WTC11 (cell line): ENCODE measurements at regions of chr7 and their contacts with region 1.

Region 1: DNA sequence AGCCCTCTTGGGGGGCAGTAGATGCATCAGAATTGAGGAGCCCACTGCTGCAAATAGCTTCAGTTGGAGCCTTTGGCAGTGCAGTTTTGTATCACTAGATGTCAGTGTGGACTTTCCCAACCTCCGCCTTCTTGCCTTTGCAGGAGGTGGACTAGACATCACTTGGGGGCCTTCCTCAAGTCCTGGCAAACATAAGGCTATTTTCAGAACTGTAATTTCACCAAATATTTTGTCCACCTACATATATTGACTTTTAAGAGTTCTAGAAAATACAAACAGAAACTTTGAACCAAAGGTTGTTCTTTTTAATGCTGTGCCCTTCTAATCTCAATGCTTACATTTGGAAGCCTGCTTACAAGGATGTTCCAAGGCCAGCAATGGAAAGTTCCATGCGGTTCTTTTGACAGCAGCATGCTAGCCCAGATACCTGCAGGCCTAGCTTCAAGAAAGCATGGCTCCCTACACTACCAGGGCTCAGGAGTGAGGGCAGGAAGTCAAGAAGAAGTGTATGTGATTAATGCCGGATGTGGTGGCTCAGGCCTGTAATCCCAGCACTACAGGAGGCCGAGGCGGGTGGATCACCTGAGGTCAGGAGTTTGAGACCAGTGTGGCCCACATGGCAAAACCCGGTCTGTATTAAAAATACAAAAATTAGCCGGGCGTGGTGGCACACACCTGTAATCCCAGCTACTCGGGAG is 8.0 kb upstream of the ZNRF2 start:
- DNase-seq: peak; percentile 60
- ATAC-seq: peak; percentile 97
- H3K4me3 Mint-ChIP-seq: no peak overlapping the region
- H3K27ac Mint-ChIP-seq: no peak overlapping the region
- H3K4me1 Mint-ChIP-seq: peaks cover 11% of the 10 kb centered on the region
- H3K27me3 Mint-ChIP-seq: no peaks in the 10 kb centered on the region
- CTCF ChIP-seq: peak; percentile 35; the same call in 1 of the 2 replicates

Region 2: GRCh38 chr7:30252885-30253795 is 23.2 kb before region 1 on chr7:
- CTCF ChIA-PET with region 1: no interaction called
- POLR2A ChIA-PET with region 1: no interaction called
- DNase-seq: no peak
- ATAC-seq: no peak
- H3K4me3 Mint-ChIP-seq: no peak overlapping the region
- H3K27ac Mint-ChIP-seq: no peak overlapping the region
- H3K4me1 Mint-ChIP-seq: peaks cover 1% of the 10 kb centered on the region; the same call in 1 of the 2 replicates
- H3K27me3 Mint-ChIP-seq: no peaks in the 10 kb centered on the region
- CTCF ChIP-seq: no peak

Region 3: DNA sequence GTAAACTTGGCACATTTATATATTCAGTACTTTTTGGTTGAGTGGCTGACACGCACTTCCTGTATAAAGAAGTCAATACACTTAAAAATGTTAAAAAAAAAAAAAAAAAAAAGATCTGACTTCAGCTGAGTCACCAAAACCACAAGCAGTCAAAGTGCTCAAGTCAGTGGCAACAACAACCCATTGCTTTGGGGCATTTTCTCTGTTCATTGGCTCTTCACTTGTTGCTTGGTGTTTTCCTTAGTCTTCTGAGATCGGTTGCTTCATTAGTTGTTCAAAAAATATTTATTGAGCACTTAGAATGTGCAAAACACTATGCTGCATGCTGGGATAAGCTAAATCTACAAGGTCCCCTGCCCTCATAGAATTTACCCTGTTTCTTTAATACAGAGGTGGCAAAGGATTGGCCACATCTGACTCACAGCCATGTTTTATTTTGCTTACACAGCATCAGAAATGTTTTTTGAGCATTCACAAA is 71.8 kb after region 1 on chr7:
- CTCF ChIA-PET with region 1: interaction called, 11 read pairs
- POLR2A ChIA-PET with region 1: no interaction called
- DNase-seq: no peak
- ATAC-seq: peak; percentile 30; the same call in 1 of the 2 replicates
- H3K4me3 Mint-ChIP-seq: no peak overlapping the region
- H3K27ac Mint-ChIP-seq: peak overlapping the region; percentile 78
- H3K4me1 Mint-ChIP-seq: peaks cover 67% of the 10 kb centered on the region
- H3K27me3 Mint-ChIP-seq: no peaks in the 10 kb centered on the region
- CTCF ChIP-seq: no peak

Region 4: GRCh38 chr7:30412810-30413504 is 136.6 kb after region 1 on chr7:
- CTCF ChIA-PET with region 1: interaction called, 60 read pairs
- POLR2A ChIA-PET with region 1: no interaction called
- DNase-seq: no peak
- ATAC-seq: peak; percentile 98
- H3K4me3 Mint-ChIP-seq: no peak overlapping the region
- H3K27ac Mint-ChIP-seq: 0 out of 2 replicates have a peak overlapping the region, but pooled peaks have one; percentile 51
- H3K4me1 Mint-ChIP-seq: peaks cover 2% of the 10 kb centered on the region; the same call in 1 of the 2 replicates
- H3K27me3 Mint-ChIP-seq: peaks cover 3% of the 10 kb centered on the region
- CTCF ChIP-seq: no peak